Transverse colon (tissue), 4 donors: ENCODE measurements at regions of chr12 and their contacts with region 1.

Region 1: GRCh38 chr12:109098183-109099050 is 1.0 kb downstream of the UNG start:
- DNase-seq: peak; percentile 73
- H3K4me3 ChIP-seq: peak overlapping the region; percentile 55 to 98 (median 68)
- H3K27ac ChIP-seq: peak overlapping the region; percentile 92 to 96 (median 94)
- H3K4me1 ChIP-seq: peaks cover 14 to 34% (median 20%) of the 10 kb centered on the region in 4 donors
- H3K27me3 ChIP-seq: no peaks in the 10 kb centered on the region
- CTCF ChIP-seq: no peak
- EP300 ChIP-seq: no peak
- POLR2A ChIP-seq: peak; percentile 72

Region 2: DNA sequence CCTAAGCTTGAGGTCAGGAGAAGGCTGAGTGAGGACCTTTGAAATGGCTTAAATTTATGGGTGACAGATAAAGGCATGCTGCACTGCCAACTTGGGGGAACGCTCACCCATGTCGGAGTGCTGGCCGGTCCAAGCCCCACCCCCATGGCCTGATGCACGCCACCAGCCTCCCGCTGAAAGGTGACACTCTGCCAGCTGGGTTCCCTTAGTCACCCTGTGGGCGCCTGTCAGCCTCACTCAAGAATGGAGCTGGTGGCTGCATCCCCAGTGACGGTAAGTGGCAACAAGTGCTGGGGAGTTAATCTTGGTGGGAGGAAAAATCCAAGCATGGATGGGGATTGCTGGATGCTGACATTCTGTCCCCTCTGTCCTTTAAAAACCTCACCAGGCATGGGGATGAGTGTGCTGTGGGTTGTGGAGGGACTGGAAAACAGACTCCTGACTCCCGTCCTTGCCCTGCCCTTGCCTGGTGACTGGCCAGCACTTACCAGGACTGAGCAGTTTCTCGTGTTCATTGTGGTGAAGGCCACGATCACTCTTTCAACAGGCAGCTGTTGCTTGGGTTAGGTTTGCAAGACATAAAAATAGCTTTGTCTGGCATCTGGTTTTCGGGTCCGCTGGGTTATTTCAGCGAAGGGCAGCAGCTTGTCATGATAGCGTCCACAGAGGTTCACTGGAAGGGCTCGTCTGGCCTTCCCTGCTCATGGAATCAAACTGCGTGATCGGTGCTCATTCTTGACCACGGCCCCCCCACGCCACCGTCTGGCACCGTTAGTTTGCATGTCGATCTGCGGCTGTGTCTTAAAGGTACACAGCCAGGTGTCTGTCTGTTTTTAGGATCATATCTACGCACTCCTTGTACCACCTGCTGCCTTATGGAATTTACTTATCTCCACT is 33.0 kb after region 1 on chr12:
- in situ Hi-C with region 1: no loop called
- intact Hi-C with region 1: loop called (anchors 1 kb)
- DNase-seq: peak; percentile 44
- H3K4me3 ChIP-seq: no peak overlapping the region
- H3K27ac ChIP-seq: peak overlapping the region; percentile 7 to 79 (median 57)
- H3K4me1 ChIP-seq: peaks cover 0 to 3% (median under 1%) of the 10 kb centered on the region in 4 donors
- H3K27me3 ChIP-seq: no peaks in the 10 kb centered on the region
- CTCF ChIP-seq: no peak
- EP300 ChIP-seq: no peak
- POLR2A ChIP-seq: no peak

Region 3: DNA sequence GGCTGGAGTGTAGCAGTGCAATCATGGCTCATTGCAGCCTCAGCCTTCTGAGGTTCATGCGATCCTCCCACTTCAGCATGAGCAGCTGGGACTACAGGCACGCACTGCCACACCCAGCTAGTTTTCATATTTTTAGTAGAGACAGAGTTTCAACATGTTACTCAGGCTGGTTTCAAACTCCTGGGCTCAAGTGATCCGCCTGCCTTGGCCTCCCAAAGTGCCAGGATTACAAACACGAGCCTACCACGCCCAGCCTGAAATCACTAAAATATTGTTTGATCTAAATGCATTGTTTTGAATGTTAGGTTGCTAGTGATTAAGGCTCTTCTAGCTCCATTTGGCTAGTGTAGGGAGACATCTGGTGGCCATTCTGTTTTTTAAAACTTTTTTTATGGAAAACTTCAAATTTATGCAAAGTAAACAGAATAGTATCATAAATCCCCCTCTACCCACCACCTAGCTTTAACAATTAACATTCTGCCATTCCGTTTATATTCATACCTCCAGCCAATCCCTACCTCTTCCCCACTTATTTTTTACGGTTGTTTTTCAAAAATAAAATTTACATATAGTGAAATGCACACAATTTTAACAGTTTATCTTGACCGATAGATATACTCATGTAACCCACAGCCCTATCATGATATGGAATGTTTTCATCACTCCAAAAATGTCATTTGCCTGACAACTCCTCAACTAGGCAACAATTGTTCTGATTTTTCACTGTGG is 287.1 kb after region 1 on chr12:
- in situ Hi-C with region 1: loop called in 2 of 4 experiments (anchors 10 to 25 kb)
- intact Hi-C with region 1: no loop called
- DNase-seq: no peak
- H3K4me3 ChIP-seq: no peak overlapping the region
- H3K27ac ChIP-seq: peak overlapping the region in 3 of 4 donors; percentile 13 to 57 (median 20)
- H3K4me1 ChIP-seq: peaks cover 0 to 16% (median 4%) of the 10 kb centered on the region in 4 donors
- H3K27me3 ChIP-seq: peaks cover 3% of the 10 kb centered on the region
- CTCF ChIP-seq: peak; percentile 34 to 52 (median 49)
- EP300 ChIP-seq: no peak
- POLR2A ChIP-seq: no peak